ENCODE measurements at regions of chr20 and their contacts with region 1.

Region 1: GRCh38 chr20:5100684-5101347 is 18.9 kb downstream of the PCNA start:
- DNase-seq: no peak
- ATAC-seq: peak; percentile 94
- H3K4me3 ChIP-seq: no peak overlapping the region
- H3K27ac ChIP-seq: no peak overlapping the region
- H3K4me1 ChIP-seq: no peaks in the 10 kb centered on the region
- H3K27me3 ChIP-seq: no peaks in the 10 kb centered on the region
- CTCF ChIP-seq: peak; percentile 72 to 85 (median 81)
- EP300 ChIP-seq: no peak
- POLR2A ChIP-seq: no peak
- RAD21 ChIP-seq: peak; percentile 85

Region 2: DNA sequence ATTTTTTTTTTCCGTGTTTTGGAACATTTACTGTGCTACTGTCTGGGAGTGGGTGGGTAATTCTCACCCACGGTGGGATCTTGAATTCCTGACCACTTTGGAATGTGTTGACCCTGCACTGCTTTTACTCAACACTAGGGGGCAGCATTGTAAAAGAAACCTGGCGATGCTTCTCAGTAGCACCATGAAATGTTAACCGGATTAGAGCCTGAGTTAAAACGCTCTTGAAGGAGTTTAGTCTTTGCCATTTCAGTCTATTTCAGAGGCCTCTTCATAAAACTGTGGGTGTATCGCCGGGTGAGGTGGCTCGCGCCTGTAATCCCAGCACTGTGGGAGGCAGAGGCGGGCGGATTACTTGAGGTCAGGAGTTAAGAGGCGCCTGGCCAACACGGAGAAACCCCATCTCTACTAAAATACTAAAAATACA is 493.5 kb before region 1 on chr20:
- CTCF ChIA-PET with region 1: interaction called, 6 read pairs
- POLR2A ChIA-PET with region 1: no interaction called
- RAD21 ChIA-PET with region 1: no interaction called
- SMC1A ChIA-PET with region 1: no interaction called
- in situ Hi-C with region 1: loop called (anchors 5 kb)
- intact Hi-C with region 1: loop called (anchors 5 kb)
- DNase-seq: peak; percentile 37
- ATAC-seq: peak; percentile 94
- H3K4me3 ChIP-seq: no peak overlapping the region
- H3K27ac ChIP-seq: no peak overlapping the region
- H3K4me1 ChIP-seq: peaks cover 6% of the 10 kb centered on the region
- H3K27me3 ChIP-seq: no peaks in the 10 kb centered on the region
- CTCF ChIP-seq: peak; percentile 85 to 91 (median 91)
- EP300 ChIP-seq: no peak
- POLR2A ChIP-seq: no peak
- RAD21 ChIP-seq: peak; percentile 100

Region 3: GRCh38 chr20:4949833-4950178 is 151.0 kb before region 1 on chr20:
- CTCF ChIA-PET with region 1: interaction called, 86 read pairs
- POLR2A ChIA-PET with region 1: interaction called, 3 read pairs
- RAD21 ChIA-PET with region 1: interaction called, 54 read pairs
- SMC1A ChIA-PET with region 1: interaction called, 58 read pairs
- in situ Hi-C with region 1: no loop called
- intact Hi-C with region 1: no loop called
- DNase-seq: no peak
- ATAC-seq: peak; percentile 82
- H3K4me3 ChIP-seq: 0 out of 2 replicates have a peak overlapping the region, but pooled peaks have one; percentile 37
- H3K27ac ChIP-seq: peak overlapping the region; percentile 24; the same call in 1 of the 2 replicates
- H3K4me1 ChIP-seq: peaks cover 21% of the 10 kb centered on the region
- H3K27me3 ChIP-seq: no peaks in the 10 kb centered on the region
- CTCF ChIP-seq: peak; percentile 60 to 82 (median 72); a peak in 5 of 6 replicates
- EP300 ChIP-seq: no peak
- POLR2A ChIP-seq: no peak
- RAD21 ChIP-seq: peak; percentile 85

Region 4: DNA sequence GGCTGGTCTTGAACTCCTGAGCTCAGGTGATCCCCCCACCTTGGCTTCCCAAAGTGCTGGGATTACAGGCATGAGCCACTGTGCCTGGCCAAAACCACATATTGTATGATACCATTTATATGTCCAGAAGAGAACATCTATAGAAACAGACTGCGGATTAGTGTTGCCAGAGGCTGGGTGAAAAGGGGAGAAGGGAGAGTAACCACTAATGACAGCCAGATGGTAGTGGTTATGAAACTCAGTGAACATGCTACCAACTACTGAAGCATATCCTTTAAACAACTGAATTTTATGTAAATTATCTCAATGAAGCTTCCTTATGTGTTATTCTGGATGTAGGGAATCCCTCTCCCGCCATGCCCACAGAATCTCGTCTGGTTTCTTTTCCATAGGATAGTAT is 115.2 kb before region 1 on chr20:
- CTCF ChIA-PET with region 1: interaction called, 10 read pairs
- POLR2A ChIA-PET with region 1: no interaction called
- RAD21 ChIA-PET with region 1: interaction called, 3 read pairs
- SMC1A ChIA-PET with region 1: interaction called, 12 read pairs
- in situ Hi-C with region 1: no loop called
- intact Hi-C with region 1: no loop called
- DNase-seq: peak; percentile 24
- ATAC-seq: peak; percentile 77
- H3K4me3 ChIP-seq: peak overlapping the region; percentile 13; the same call in 1 of the 2 replicates
- H3K27ac ChIP-seq: peak overlapping the region; percentile 11; the same call in 1 of the 2 replicates
- H3K4me1 ChIP-seq: peaks cover 25% of the 10 kb centered on the region
- H3K27me3 ChIP-seq: no peaks in the 10 kb centered on the region
- CTCF ChIP-seq: no peak
- EP300 ChIP-seq: no peak
- POLR2A ChIP-seq: no peak
- RAD21 ChIP-seq: no peak

Region 5: GRCh38 chr20:5056801-5057599 is 43.8 kb before region 1 on chr20:
- CTCF ChIA-PET with region 1: interaction called, 104 read pairs
- POLR2A ChIA-PET with region 1: interaction called, 8 read pairs
- RAD21 ChIA-PET with region 1: interaction called, 44 read pairs
- SMC1A ChIA-PET with region 1: interaction called, 79 read pairs
- in situ Hi-C with region 1: no loop called
- intact Hi-C with region 1: loop called (anchors 1 kb)
- DNase-seq: peak; percentile 38
- ATAC-seq: peak; percentile 97
- H3K4me3 ChIP-seq: no peak overlapping the region
- H3K27ac ChIP-seq: no peak overlapping the region
- H3K4me1 ChIP-seq: peaks cover 4% of the 10 kb centered on the region; the same call in 1 of the 2 replicates
- H3K27me3 ChIP-seq: peaks cover 0 to 8% of the 10 kb centered on the region in 2 experiments; a peak in 1 of 4 replicates
- CTCF ChIP-seq: peak; percentile 43 to 56 (median 53)
- EP300 ChIP-seq: no peak
- POLR2A ChIP-seq: no peak
- RAD21 ChIP-seq: peak; percentile 48

Region 6: GRCh38 chr20:5090191-5090590 is 10.6 kb before region 1 on chr20:
- CTCF ChIA-PET with region 1: interaction called, 18 read pairs
- POLR2A ChIA-PET with region 1: interaction called, 3 read pairs
- RAD21 ChIA-PET with region 1: interaction called, 11 read pairs
- SMC1A ChIA-PET with region 1: interaction called, 11 read pairs
- in situ Hi-C with region 1: no loop called
- intact Hi-C with region 1: no loop called
- DNase-seq: no peak
- ATAC-seq: peak; percentile 93
- H3K4me3 ChIP-seq: no peak overlapping the region
- H3K27ac ChIP-seq: no peak overlapping the region
- H3K4me1 ChIP-seq: no peaks in the 10 kb centered on the region
- H3K27me3 ChIP-seq: no peaks in the 10 kb centered on the region
- CTCF ChIP-seq: no peak
- EP300 ChIP-seq: peak; percentile 64 to 72; a peak in 2 of 4 replicates
- POLR2A ChIP-seq: no peak
- RAD21 ChIP-seq: no peak

Region 7: DNA sequence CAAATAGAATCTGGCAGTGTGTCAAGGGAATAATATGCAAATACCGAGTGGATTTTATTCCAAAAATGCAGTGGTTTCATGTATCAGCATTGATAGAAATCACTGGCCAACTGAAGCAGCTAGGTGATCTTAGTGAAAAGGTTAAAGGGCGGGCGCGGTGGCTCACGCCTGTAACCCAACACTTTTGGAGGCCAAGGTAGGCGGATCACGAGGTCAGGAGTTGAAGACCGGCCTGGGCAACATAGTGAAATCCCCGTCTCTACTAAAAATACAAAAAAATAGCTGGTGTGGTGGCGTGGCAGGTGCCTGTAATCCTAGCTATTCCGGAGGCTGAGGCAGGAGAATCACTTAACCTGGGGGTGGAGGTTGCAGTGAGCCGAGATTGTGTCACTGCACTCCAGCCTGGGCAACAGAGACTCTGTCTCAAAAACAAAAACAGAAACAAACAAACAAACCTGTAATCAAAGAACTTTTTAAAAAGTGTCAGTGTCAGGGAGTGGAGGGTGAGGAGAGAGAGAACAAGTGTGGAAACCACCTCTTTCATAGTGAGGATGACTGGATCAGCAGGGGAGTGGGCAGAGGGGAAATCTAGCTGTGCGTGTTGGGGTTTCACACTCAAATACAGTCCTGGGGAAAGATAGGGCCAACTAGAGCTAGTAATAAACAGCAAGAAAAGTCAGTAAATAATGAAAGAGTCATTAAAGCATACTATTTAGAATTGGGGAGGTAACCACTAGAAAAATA is 83.1 kb after region 1 on chr20:
- CTCF ChIA-PET with region 1: no interaction called
- POLR2A ChIA-PET with region 1: no interaction called
- RAD21 ChIA-PET with region 1: no interaction called
- SMC1A ChIA-PET with region 1: no interaction called
- in situ Hi-C with region 1: no loop called
- intact Hi-C with region 1: no loop called
- DNase-seq: no peak
- ATAC-seq: no peak
- H3K4me3 ChIP-seq: no peak overlapping the region
- H3K27ac ChIP-seq: no peak overlapping the region
- H3K4me1 ChIP-seq: no peaks in the 10 kb centered on the region
- H3K27me3 ChIP-seq: no peaks in the 10 kb centered on the region
- CTCF ChIP-seq: no peak
- EP300 ChIP-seq: no peak
- POLR2A ChIP-seq: no peak
- RAD21 ChIP-seq: no peak

Region 8: DNA sequence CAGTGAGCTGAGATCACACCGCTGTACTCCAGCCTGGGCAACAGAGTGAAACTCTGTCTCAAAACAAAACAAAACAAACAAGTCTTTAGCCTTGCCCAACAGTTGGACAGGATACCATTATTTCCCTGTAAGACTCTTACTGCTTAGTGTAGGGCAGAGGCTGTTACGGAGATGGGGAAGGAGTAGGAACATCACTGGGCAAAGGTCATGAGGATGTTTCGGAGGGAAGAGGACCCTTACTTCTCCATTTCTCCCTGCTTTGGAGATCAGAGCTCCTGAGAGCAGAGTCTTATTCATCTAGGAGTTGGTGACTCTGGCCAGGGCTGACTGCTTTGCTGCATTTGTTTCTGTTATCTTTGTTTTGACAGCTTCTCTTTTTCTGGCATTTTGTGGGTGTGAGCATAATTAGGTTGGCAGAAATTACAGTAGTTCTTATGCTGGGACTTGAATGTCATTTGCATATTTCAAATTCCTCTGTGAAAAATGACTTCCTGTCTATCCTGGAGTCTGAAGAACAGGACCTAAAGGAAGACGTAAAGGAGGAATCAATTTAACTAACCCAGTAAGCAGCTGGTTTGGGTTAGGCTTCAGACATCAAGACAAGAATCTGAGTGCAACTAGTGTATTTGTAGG is 115.0 kb after region 1 on chr20:
- CTCF ChIA-PET with region 1: no interaction called
- POLR2A ChIA-PET with region 1: no interaction called
- RAD21 ChIA-PET with region 1: no interaction called
- SMC1A ChIA-PET with region 1: no interaction called
- in situ Hi-C with region 1: no loop called
- intact Hi-C with region 1: no loop called
- DNase-seq: no peak
- ATAC-seq: no peak
- H3K4me3 ChIP-seq: no peak overlapping the region
- H3K27ac ChIP-seq: no peak overlapping the region
- H3K4me1 ChIP-seq: no peaks in the 10 kb centered on the region
- H3K27me3 ChIP-seq: no peaks in the 10 kb centered on the region
- CTCF ChIP-seq: no peak
- EP300 ChIP-seq: no peak
- POLR2A ChIP-seq: no peak
- RAD21 ChIP-seq: no peak

Measured in GM12878 (cell line).